Cardiac septum (tissue), 1 donor: ENCODE measurements at regions of chr16 and their contacts with region 1.

Region 1: GRCh38 chr16:65671-66137 is 6.7 kb downstream of the RHBDF1 start:
- DNase-seq: peak; percentile 91

Region 2: DNA sequence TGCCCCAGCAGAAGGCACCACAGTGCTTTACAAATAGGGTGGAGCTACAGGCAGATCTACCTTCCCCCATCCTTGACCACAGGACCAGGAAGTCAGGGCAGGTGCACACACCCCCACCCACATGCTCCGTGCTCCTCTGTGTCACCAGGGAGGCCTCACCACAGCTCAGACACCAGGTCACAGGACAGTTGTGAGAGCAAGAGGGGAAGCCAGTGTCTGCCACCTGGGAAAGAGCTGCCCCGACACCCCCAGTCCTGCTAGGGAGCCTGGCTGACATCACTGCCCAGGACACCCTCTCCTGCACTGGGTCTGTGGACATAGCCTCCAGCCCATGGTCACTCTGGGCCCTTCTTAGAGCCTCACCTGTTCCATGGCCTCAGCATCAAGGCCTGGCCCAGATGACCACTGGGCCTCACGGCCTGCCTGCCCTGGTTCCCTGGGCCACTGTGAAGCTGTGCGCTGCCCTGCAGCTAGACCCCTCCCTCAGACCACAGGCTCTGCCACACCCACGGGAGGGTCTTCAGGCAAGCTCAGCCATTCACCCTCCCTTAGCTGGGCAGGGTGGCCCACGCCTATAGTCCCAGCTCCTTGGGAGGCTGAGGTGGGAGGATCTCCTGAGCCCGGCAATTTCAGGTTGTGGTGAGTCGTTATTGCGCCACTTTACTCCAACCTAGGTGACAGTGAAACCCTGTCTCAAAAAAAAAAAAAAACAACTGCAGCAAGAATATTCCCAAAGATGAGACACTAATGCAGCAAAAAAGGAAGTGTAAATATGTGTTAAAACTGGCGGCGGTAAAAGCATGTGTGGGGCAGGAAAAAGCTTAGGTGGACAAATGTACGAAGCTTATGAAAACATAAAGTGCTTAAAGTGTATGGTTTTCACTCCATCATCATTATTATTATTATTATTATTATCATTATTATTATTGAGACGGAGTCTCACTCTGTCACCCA is 26.5 kb before region 1 on chr16:
- intact Hi-C with region 1: no loop called
- DNase-seq: no peak

Region 3: DNA sequence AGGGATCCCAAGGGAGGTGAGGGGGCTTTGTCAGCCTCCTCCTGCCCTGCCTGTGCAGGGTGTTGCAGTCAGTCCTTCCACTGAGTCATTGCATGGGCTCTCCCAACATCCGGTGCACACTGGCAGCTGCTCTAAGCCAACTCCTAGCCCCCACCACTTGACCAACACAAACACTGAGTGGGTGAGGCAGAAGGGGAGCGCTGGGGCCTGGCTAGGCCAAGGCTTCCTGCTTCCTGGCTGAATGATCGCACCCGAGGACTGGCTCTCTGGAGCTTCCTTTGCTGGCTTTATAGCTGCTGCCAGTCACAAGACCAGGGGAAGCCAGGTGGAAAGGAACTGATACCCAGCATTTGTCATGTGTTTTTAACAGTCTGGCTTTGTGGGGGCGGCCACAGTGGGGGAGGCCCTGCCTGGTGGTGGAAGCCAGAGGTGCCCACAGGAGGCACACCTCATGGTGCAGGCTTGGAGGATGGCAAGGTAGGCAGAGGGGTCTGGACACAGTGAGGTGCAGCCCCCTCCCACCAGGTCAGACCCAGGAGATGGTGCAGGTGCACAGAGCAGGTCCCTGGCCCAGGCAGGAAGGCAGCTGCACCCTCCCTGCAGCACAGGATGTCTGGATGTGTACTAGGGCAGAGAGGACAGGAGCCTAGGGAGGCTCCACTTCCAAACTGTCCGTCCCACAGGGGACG is 19.2 kb after region 1 on chr16:
- intact Hi-C with region 1: no loop called
- DNase-seq: peak; percentile 86

Region 4: GRCh38 chr16:96935-97381 is 31.3 kb after region 1 on chr16:
- intact Hi-C with region 1: loop called (anchors 1 kb)
- DNase-seq: peak; percentile 93

Region 5: DNA sequence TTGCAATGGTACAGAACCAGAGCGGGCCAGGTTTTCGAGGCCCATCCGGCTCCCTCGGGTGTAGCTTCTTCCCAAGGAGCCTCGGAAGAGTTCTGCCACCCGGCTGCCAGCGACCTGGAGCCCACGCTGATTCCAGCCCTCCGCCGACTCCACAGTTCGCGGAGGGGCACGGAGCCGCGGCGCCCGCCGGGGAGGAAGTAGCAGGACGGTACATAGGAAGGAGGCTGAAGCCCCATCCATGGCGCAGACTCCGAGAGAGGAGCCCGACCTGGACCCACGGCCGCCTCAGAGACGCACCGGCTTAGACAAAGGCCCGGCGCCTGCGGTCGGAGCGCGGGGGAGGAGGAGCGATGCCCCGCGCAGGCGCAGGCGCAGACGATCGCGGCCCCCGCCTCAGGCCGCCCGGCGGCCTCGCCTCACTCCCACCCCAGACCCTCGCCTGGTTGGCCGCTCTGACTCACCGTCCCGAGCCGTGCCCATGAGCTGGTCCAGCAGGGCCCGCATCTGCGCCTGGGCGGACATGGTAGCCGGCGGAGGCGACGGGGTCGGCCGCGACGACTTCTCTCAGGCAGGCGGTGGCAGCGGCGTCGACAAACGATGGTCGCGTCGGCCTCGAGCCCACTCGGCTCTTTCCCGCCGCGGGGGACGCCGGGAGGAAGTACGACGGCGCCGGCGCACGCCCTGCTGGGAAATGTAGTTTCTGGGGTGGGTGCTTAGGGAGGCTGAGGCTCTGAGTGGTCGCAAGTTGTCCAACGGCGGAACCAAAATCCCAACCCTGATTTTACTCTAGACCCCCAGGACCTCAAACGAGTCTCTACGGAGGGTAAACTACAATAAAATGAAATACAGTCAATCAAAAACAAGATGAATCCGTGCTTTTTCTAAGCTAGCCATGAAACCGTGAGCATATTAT is 163.4 kb after region 1 on chr16 and contains the start of gene LUC7L:
- intact Hi-C with region 1: no loop called
- DNase-seq: peak; percentile 95
- total RNA-seq, gene LUC7L: 30.9 TPM

Region 6: GRCh38 chr16:303760-304505 is 238.2 kb after region 1 on chr16:
- intact Hi-C with region 1: no loop called
- DNase-seq: no peak